ENCODE measurements at regions of chr6 and their contacts with region 1.

Region 1: GRCh38 chr6:36912586-36912985 is 26.8 kb downstream of the C6orf89 start:
- DNase-seq: peak in 8 of 9 donors; percentile 54 to 81 (median 72)
- ATAC-seq: peak; percentile 94
- H3K4me3 ChIP-seq: peak overlapping the region; percentile 32
- H3K4me3 Mint-ChIP-seq: peak overlapping the region; percentile 60 to 84 (median 74)
- H3K27ac ChIP-seq: peak overlapping the region; percentile 44
- H3K27ac Mint-ChIP-seq: peak overlapping the region; percentile 73 to 97 (median 92)
- H3K4me1 ChIP-seq: peaks cover 23% of the 10 kb centered on the region in 2 donors
- H3K4me1 Mint-ChIP-seq: peaks cover 18 to 69% (median 38%) of the 10 kb centered on the region in 7 donors
- H3K27me3 ChIP-seq: no peaks in the 10 kb centered on the region
- H3K27me3 Mint-ChIP-seq: no peaks in the 10 kb centered on the region

Region 2: GRCh38 chr6:36268478-36269275 is 643.9 kb before region 1 on chr6:
- CTCF ChIA-PET with region 1: no interaction called
- POLR2A ChIA-PET with region 1: no interaction called
- intact Hi-C with region 1: no loop called
- DNase-seq: no peak
- ATAC-seq: no peak
- H3K4me3 ChIP-seq: no peak overlapping the region
- H3K4me3 Mint-ChIP-seq: peak overlapping the region in 1 of 10 donors; percentile 21
- H3K27ac ChIP-seq: no peak overlapping the region
- H3K27ac Mint-ChIP-seq: peak overlapping the region in 1 of 9 donors; percentile 25
- H3K4me1 ChIP-seq: no peaks in the 10 kb centered on the region
- H3K4me1 Mint-ChIP-seq: peaks cover 0 to 1% (median 0%) of the 10 kb centered on the region in 7 donors
- H3K27me3 ChIP-seq: no peaks in the 10 kb centered on the region
- H3K27me3 Mint-ChIP-seq: peaks cover 0 to 20% (median 13%) of the 10 kb centered on the region in 5 donors

Region 3: GRCh38 chr6:36954262-36954931 is 41.8 kb after region 1 on chr6 and contains the start of gene PI16:
- CTCF ChIA-PET with region 1: no interaction called
- POLR2A ChIA-PET with region 1: no interaction called
- intact Hi-C with region 1: loop called in 1 of 2 experiments (anchors 5 kb)
- DNase-seq: no peak
- ATAC-seq: peak; percentile 76
- H3K4me3 ChIP-seq: peak within 1 kb of the TSS; percentile 12
- H3K4me3 Mint-ChIP-seq: peak within 1 kb of the TSS; percentile 43 to 90 (median 80)
- H3K27ac ChIP-seq: peak within 1 kb of the TSS; percentile 55
- H3K27ac Mint-ChIP-seq: peak within 1 kb of the TSS; percentile 16 to 91 (median 61)
- H3K4me1 ChIP-seq: peaks cover 23 to 35% of the 10 kb centered on the region in 2 donors
- H3K4me1 Mint-ChIP-seq: peaks cover 32 to 56% (median 43%) of the 10 kb centered on the region in 7 donors
- H3K27me3 ChIP-seq: no peaks in the 10 kb centered on the region
- H3K27me3 Mint-ChIP-seq: peaks cover 0 to 10% (median 4%) of the 10 kb centered on the region in 5 donors
- total RNA-seq, gene PI16: 1.2 to 7.5 (median 1.6) TPM

Region 4: DNA sequence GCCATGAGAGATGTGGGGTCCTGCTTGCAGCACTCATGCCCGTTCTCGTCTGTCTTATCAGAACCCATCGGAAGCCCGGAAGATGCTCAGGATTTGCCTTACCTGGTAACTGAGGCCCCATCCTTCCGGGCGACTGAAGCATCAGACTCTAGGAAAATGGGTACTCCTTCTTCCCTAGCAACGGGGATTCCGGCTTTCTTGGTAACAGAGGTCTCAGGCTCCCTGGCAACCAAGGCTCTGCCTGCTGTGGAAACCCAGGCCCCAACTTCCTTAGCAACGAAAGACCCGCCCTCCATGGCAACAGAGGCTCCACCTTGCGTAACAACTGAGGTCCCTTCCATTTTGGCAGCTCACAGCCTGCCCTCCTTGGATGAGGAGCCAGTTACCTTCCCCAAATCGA is 50.3 kb after region 1 on chr6:
- CTCF ChIA-PET with region 1: no interaction called
- POLR2A ChIA-PET with region 1: no interaction called
- intact Hi-C with region 1: loop called in 1 of 2 experiments (anchors 2 kb)
- DNase-seq: peak; percentile 69 to 89 (median 81)
- ATAC-seq: peak; percentile 82
- H3K4me3 ChIP-seq: no peak overlapping the region
- H3K4me3 Mint-ChIP-seq: peak overlapping the region in 9 of 10 donors; percentile 57 to 80 (median 70)
- H3K27ac ChIP-seq: peak overlapping the region; percentile 40
- H3K27ac Mint-ChIP-seq: peak overlapping the region; percentile 74 to 96 (median 93)
- H3K4me1 ChIP-seq: peaks cover 19 to 24% of the 10 kb centered on the region in 2 donors
- H3K4me1 Mint-ChIP-seq: peaks cover 20 to 55% (median 37%) of the 10 kb centered on the region in 7 donors
- H3K27me3 ChIP-seq: no peaks in the 10 kb centered on the region
- H3K27me3 Mint-ChIP-seq: no peaks in the 10 kb centered on the region

Region 5: GRCh38 chr6:36979347-36979742 is 66.8 kb after region 1 on chr6:
- CTCF ChIA-PET with region 1: no interaction called
- POLR2A ChIA-PET with region 1: no interaction called
- intact Hi-C with region 1: loop called in 1 of 2 experiments (anchors 1 kb)
- DNase-seq: peak in 6 of 9 donors; percentile 36 to 62 (median 48)
- ATAC-seq: peak; percentile 70
- H3K4me3 ChIP-seq: no peak overlapping the region
- H3K4me3 Mint-ChIP-seq: peak overlapping the region in 2 of 10 donors; percentile 2 to 20
- H3K27ac ChIP-seq: no peak overlapping the region
- H3K27ac Mint-ChIP-seq: peak overlapping the region; percentile 44 to 88 (median 80)
- H3K4me1 ChIP-seq: peaks cover 13 to 20% of the 10 kb centered on the region in 2 donors
- H3K4me1 Mint-ChIP-seq: peaks cover 0 to 33% (median 27%) of the 10 kb centered on the region in 7 donors
- H3K27me3 ChIP-seq: no peaks in the 10 kb centered on the region
- H3K27me3 Mint-ChIP-seq: no peaks in the 10 kb centered on the region

Region 6: DNA sequence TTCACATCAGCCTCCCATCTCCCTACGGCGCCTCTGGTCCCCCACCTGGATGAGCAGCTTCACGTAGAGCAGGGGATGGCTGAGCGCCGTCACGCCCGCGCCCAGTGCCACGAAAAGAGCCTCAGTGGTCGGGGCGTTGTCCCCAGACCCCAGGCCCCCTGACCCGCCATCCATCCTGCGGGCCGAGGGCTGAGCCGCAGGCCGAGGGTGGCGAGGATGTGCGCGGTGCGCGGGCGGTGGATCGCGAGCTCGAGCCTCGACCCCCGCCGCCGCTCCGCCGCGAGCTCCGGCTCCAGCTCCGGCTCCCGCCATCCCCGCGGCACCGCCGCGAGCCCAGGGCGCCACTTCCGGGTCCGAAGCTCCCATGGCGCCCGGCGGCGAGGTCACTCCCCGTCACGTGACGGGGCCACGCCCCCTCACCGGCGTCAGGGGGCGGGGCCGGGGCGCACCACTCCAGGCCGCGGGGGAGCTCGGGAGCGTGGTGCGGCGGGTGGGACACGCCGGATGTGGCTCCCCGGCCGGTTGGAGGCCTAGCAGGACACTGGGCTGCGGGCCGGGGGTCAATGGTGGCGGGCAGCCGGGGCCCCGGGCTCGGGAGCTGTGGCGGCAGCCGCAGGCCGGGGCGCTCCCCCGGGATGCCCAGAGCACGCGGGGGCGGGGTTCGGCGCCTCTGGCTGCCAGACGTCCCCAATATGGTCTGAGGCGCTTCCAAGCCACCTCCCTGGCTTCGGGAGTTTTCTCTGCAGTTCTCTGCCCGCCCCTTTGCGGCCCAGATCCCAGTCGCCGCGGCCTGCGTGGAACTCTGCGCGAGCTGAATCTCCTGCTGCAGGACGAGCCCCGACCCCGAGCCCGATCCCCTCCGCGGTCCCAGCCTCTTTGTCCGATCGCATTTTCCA is 73.5 kb after region 1 on chr6 and contains the start of gene MTCH1:
- CTCF ChIA-PET with region 1: no interaction called
- POLR2A ChIA-PET with region 1: interaction called, 6 read pairs
- intact Hi-C with region 1: loop called (anchors 1 to 2 kb)
- DNase-seq: peak; percentile 85 to 98 (median 92)
- ATAC-seq: peak; percentile 93
- H3K4me3 ChIP-seq: peak within 1 kb of the TSS; percentile 98
- H3K4me3 Mint-ChIP-seq: peak within 1 kb of the TSS in 6 of 10 donors; percentile 98 to 100 (median 100)
- H3K27ac ChIP-seq: peak within 1 kb of the TSS; percentile 96
- H3K27ac Mint-ChIP-seq: peak within 1 kb of the TSS in 7 of 9 donors; percentile 98 to 99 (median 99)
- H3K4me1 ChIP-seq: peaks cover 22 to 27% of the 10 kb centered on the region in 2 donors
- H3K4me1 Mint-ChIP-seq: peaks cover 12 to 26% (median 18%) of the 10 kb centered on the region in 7 donors
- H3K27me3 ChIP-seq: no peaks in the 10 kb centered on the region
- H3K27me3 Mint-ChIP-seq: peaks cover 0 to 17% (median 0%) of the 10 kb centered on the region in 5 donors
- total RNA-seq, gene MTCH1: 123 to 198 (median 130) TPM

Region 7: GRCh38 chr6:37285861-37286311 is 373.3 kb after region 1 on chr6:
- CTCF ChIA-PET with region 1: no interaction called
- POLR2A ChIA-PET with region 1: no interaction called
- intact Hi-C with region 1: no loop called
- DNase-seq: no peak
- ATAC-seq: no peak
- H3K4me3 ChIP-seq: no peak overlapping the region
- H3K4me3 Mint-ChIP-seq: no peak overlapping the region
- H3K27ac ChIP-seq: no peak overlapping the region
- H3K27ac Mint-ChIP-seq: peak overlapping the region in 1 of 9 donors; percentile 7
- H3K4me1 ChIP-seq: peaks cover 12 to 14% of the 10 kb centered on the region in 2 donors
- H3K4me1 Mint-ChIP-seq: peaks cover 18 to 71% (median 21%) of the 10 kb centered on the region in 7 donors
- H3K27me3 ChIP-seq: no peaks in the 10 kb centered on the region
- H3K27me3 Mint-ChIP-seq: no peaks in the 10 kb centered on the region